GM12878 (cell line): ENCODE measurements at regions of chr4 and their contacts with region 1.

Region 1: DNA sequence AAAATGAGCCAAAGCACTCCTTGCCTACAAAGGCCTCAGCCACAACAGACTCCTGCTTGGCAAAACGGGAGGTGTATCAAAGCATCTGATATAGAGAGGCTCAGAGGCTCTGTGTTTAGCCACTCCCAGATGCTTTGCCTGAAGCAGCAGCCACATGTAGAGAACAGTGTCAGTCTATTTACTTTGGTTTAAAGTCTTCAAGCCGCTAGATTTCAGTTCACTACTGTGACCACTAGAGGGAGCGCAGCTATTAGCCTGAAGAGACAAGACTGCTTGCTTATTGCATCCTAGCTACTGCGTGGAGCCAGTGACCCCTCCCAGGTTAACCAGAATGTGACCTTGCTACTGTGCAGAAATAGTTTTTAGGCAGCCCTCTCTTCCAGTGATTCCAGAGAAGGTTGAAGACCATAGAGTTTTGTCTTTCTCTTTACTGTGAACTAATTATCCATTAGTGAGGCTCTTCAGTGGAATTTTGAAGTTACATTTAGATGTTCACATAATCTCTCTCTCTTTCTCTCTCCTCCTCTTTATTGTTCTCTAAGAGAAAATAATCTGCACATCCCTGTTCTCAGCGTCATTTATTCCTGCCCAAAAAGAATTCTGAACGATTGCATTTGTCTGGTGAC is 39.3 kb downstream of the BMP3 start:
- DNase-seq: peak; percentile 32
- ATAC-seq: peak; percentile 96
- H3K4me3 ChIP-seq: no peak overlapping the region
- H3K27ac ChIP-seq: no peak overlapping the region
- H3K4me1 ChIP-seq: no peaks in the 10 kb centered on the region
- H3K27me3 ChIP-seq: 0 out of 4 replicates have a peak, but pooled peaks cover 0 to 2% of the 10 kb centered on the region in 2 experiments
- CTCF ChIP-seq: peak; percentile 80 to 93 (median 93)
- EP300 ChIP-seq: no peak
- POLR2A ChIP-seq: no peak
- RAD21 ChIP-seq: peak; percentile 80

Region 2: DNA sequence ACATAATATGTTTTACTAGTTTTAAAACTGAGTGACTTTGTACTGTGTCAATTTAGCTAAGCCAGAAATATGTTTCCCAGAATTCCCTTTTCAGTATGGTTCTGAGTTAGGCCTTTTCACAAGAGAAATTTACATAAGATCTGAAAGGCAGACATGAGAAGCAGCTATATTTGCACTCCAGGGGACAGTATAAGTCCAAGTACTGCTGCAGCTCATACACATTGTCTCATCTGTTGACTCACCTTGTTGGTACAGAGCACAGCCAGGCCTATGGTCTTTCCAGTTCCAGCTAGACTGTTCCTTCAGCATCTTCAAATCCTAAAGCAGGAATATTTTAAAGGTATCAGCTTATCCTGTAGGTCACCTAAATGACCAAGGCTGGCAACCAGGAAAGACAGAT is 14.2 kb after region 1 on chr4:
- CTCF ChIA-PET with region 1: interaction called, 17 read pairs
- POLR2A ChIA-PET with region 1: no interaction called
- RAD21 ChIA-PET with region 1: interaction called, 6 read pairs
- SMC1A ChIA-PET with region 1: interaction called, 4 read pairs
- in situ Hi-C with region 1: no loop called
- intact Hi-C with region 1: no loop called
- DNase-seq: no peak
- ATAC-seq: no peak
- H3K4me3 ChIP-seq: no peak overlapping the region
- H3K27ac ChIP-seq: no peak overlapping the region
- H3K4me1 ChIP-seq: no peaks in the 10 kb centered on the region
- H3K27me3 ChIP-seq: no peaks in the 10 kb centered on the region
- CTCF ChIP-seq: no peak
- EP300 ChIP-seq: no peak
- POLR2A ChIP-seq: no peak
- RAD21 ChIP-seq: no peak

Region 3: GRCh38 chr4:81260443-81261101 is 190.8 kb after region 1 on chr4:
- CTCF ChIA-PET with region 1: interaction called, 36 read pairs
- POLR2A ChIA-PET with region 1: no interaction called
- RAD21 ChIA-PET with region 1: interaction called, 6 read pairs
- SMC1A ChIA-PET with region 1: interaction called, 15 read pairs
- in situ Hi-C with region 1: no loop called
- intact Hi-C with region 1: loop called (anchors 5 kb)
- DNase-seq: no peak
- ATAC-seq: peak; percentile 46
- H3K4me3 ChIP-seq: no peak overlapping the region
- H3K27ac ChIP-seq: no peak overlapping the region
- H3K4me1 ChIP-seq: no peaks in the 10 kb centered on the region
- H3K27me3 ChIP-seq: no peaks in the 10 kb centered on the region
- CTCF ChIP-seq: peak; percentile 16 to 30 (median 28); a peak in 4 of 6 replicates
- EP300 ChIP-seq: no peak
- POLR2A ChIP-seq: no peak
- RAD21 ChIP-seq: 0 out of 2 replicates have a peak, but pooled peaks have one; percentile 3

Region 4: DNA sequence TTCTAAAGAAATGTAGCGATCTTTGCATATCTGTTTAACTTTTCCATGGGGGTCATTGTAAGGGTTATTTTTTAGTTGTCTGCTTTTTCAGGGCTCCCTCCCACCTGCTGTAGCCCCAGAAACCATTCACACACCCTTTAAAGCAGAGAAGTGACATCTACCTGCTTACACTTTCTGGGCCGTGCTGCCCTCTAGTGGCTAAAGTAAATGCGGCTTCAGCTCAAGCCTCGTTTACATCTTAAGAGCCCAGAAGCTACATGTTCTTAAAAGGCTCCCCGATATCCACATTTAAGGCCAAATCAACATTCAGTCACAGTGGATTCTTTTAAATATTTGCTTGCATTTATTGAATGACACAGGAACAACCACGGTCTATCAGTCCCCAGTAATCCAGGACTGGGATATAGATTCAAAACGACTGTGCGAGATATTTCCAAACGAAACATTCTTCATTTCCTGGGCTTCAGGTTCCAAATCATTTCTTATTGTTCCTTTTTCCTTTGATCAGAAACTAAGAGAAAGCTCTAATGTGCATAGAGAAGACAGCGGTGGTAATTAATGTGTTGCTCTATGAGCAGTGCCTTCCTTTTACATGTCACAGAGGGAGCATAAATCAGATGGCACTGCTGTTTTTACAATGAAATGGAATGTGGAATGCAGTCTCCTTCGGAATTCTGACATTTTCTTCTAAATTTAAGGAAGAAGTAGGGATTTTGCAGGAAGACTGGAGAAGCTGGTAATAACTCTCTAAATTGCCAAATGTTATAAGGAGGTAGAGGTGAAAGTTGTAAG is 282.0 kb after region 1 on chr4:
- CTCF ChIA-PET with region 1: interaction called, 75 read pairs
- POLR2A ChIA-PET with region 1: no interaction called
- RAD21 ChIA-PET with region 1: interaction called, 26 read pairs
- SMC1A ChIA-PET with region 1: interaction called, 49 read pairs
- in situ Hi-C with region 1: no loop called
- intact Hi-C with region 1: loop called (anchors 1 kb)
- DNase-seq: peak; percentile 8
- ATAC-seq: peak; percentile 93
- H3K4me3 ChIP-seq: no peak overlapping the region
- H3K27ac ChIP-seq: no peak overlapping the region
- H3K4me1 ChIP-seq: no peaks in the 10 kb centered on the region
- H3K27me3 ChIP-seq: no peaks in the 10 kb centered on the region
- CTCF ChIP-seq: peak; percentile 84 to 95 (median 85)
- EP300 ChIP-seq: no peak
- POLR2A ChIP-seq: no peak
- RAD21 ChIP-seq: peak; percentile 82

Region 5: GRCh38 chr4:81505004-81505598 is 435.3 kb after region 1 on chr4:
- CTCF ChIA-PET with region 1: no interaction called
- POLR2A ChIA-PET with region 1: no interaction called
- RAD21 ChIA-PET with region 1: no interaction called
- SMC1A ChIA-PET with region 1: no interaction called
- in situ Hi-C with region 1: no loop called
- intact Hi-C with region 1: no loop called
- DNase-seq: no peak
- ATAC-seq: peak; percentile 34
- H3K4me3 ChIP-seq: no peak overlapping the region
- H3K27ac ChIP-seq: no peak overlapping the region
- H3K4me1 ChIP-seq: no peaks in the 10 kb centered on the region
- H3K27me3 ChIP-seq: peaks cover 0 to 2% of the 10 kb centered on the region in 2 experiments; a peak in 1 of 4 replicates
- CTCF ChIP-seq: no peak
- EP300 ChIP-seq: no peak
- POLR2A ChIP-seq: no peak
- RAD21 ChIP-seq: 0 out of 2 replicates have a peak, but pooled peaks have one; percentile 5